Ovary (tissue), 10 donors: ENCODE measurements at regions of chr9 and their contacts with region 1.

Region 1: GRCh38 chr9:120919639-120920451 is 6.8 kb downstream of the TRAF1 start:
- DNase-seq: no peak
- H3K4me3 ChIP-seq: no peak overlapping the region
- H3K27ac ChIP-seq: peak overlapping the region in 1 of 2 donors; percentile 62
- H3K4me1 ChIP-seq: peaks cover 7% of the 10 kb centered on the region
- H3K27me3 ChIP-seq: no peaks in the 10 kb centered on the region
- CTCF ChIP-seq: no peak
- EP300 ChIP-seq: no peak
- POLR2A ChIP-seq: no peak

Region 2: DNA sequence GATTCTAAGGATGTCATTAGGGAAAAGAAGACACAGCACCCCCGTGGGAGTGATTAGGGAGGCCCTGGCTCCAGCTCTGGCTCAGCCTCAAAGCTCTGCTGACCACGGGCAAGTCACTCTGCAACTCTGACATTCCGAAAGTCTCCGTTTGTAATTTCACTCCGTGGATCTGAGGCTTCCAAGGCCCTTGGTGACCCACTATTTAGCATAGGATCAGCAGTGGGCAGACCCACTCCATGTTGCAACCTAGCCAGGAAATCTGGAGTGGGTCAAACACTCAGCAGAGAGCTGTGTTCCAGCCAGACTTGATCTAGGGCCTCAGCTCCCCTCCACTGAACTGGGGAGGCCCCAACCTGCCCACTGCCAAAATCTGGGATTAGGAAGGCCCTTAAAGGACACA is 54.7 kb before region 1 on chr9:
- intact Hi-C with region 1: no loop called
- DNase-seq: no peak
- H3K4me3 ChIP-seq: no peak overlapping the region
- H3K27ac ChIP-seq: no peak overlapping the region
- H3K4me1 ChIP-seq: peaks cover 6% of the 10 kb centered on the region
- H3K27me3 ChIP-seq: no peaks in the 10 kb centered on the region
- CTCF ChIP-seq: no peak
- EP300 ChIP-seq: no peak
- POLR2A ChIP-seq: no peak

Region 3: GRCh38 chr9:120875954-120876841 is 43.6 kb before region 1 on chr9:
- intact Hi-C with region 1: loop called in 1 of 4 experiments (anchors 5 kb)
- DNase-seq: peak; percentile 85 to 90 (median 88)
- H3K4me3 ChIP-seq: peak overlapping the region; percentile 52
- H3K27ac ChIP-seq: peak overlapping the region; percentile 97 to 99
- H3K4me1 ChIP-seq: no peaks in the 10 kb centered on the region
- H3K27me3 ChIP-seq: no peaks in the 10 kb centered on the region
- CTCF ChIP-seq: peak in 2 of 3 donors; percentile 7 to 14
- EP300 ChIP-seq: no peak
- POLR2A ChIP-seq: peak; percentile 33